Activated B cell treated with CpG ODN at 0.5 μM for 24 hours (primary cell): ENCODE measurements at regions of chr4 and their contacts with region 1.

Region 1: DNA sequence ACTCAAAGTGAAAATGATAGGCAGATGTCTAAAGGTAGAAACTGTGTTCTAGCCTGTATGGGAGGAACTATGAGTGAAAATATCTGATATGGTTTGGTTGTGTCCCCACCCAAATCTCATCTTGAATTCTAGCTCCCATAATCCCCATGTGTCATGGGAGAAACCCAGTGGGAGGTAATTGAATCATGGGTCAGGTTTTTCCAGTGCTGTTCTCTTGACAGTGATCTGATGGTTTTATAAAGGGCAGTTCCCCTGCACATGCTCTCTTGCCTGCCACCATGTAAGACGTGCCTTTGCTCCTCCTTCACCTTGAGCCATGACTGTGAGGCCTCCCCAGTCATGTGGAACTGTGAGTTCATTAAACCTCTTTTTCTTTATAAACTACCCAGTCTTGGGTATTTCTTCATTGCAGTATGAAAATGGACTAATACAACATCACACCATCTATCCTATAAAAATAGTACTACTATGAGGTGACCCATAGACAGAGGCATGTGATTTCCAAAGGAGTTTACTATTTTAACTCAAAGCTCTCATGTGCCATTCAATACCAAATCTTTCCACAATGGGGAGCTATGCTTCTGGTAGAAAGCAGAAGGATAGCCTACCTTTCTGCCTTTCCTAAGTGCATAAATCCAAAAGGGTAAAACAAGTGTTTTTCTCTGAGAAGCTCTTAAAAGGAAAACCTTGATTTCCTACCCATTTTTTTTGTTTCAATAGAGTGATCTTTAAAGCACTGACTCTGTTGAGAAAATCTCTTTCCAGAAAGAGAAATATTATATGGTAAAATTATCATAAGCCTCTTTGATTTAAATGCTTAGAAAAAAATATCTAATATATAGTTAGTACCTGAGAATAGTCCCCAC is 38.8 kb downstream of the SEC31A start:
- DNase-seq: no peak
- ATAC-seq: no peak
- H3K4me3 Mint-ChIP-seq: no peak overlapping the region
- H3K27ac Mint-ChIP-seq: no peak overlapping the region
- H3K4me1 Mint-ChIP-seq: no peaks in the 10 kb centered on the region
- H3K27me3 Mint-ChIP-seq: no peaks in the 10 kb centered on the region
- CTCF ChIP-seq: no peak

Region 2: DNA sequence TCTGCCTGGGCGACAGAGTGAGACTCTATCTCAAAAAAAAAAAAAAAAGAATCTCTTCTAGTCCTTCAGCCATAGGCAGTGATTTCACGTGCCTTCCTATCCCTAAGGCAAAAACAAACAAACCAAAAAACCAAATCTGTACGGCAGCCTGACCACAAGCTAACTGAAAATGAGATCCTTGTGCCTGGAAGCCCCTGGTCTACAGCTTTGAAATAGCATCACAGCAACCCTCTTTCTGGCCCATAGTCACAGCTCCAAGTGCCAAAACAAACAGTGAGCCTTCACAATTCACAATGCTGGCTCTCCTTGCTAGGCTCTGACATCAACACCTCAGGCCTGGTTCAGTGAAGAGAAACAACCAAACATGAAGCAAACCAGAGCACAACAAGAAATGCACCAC is 336.4 kb before region 1 on chr4:
- CTCF ChIA-PET with region 1: no interaction called
- POLR2A ChIA-PET with region 1: no interaction called
- intact Hi-C with region 1: no loop called
- DNase-seq: no peak
- ATAC-seq: no peak
- H3K4me3 Mint-ChIP-seq: no peak overlapping the region
- H3K27ac Mint-ChIP-seq: no peak overlapping the region
- H3K4me1 Mint-ChIP-seq: no peaks in the 10 kb centered on the region
- H3K27me3 Mint-ChIP-seq: peaks cover 7% of the 10 kb centered on the region
- CTCF ChIP-seq: no peak

Region 3: GRCh38 chr4:82865592-82865991 is 13.5 kb after region 1 on chr4:
- CTCF ChIA-PET with region 1: interaction called, 3 read pairs
- POLR2A ChIA-PET with region 1: no interaction called
- intact Hi-C with region 1: loop called (anchors 2 kb)
- DNase-seq: no peak
- ATAC-seq: no peak
- H3K4me3 Mint-ChIP-seq: no peak overlapping the region
- H3K27ac Mint-ChIP-seq: no peak overlapping the region
- H3K4me1 Mint-ChIP-seq: no peaks in the 10 kb centered on the region
- H3K27me3 Mint-ChIP-seq: no peaks in the 10 kb centered on the region
- CTCF ChIP-seq: no peak